Activated CD8-positive, alpha-beta T cell treated with anti-CD3 and anti-CD28 coated beads for 36 hours (primary cell): ENCODE measurements at regions of chr3 and their contacts with region 1.

Region 1: GRCh38 chr3:11060500-11061251 is 68.1 kb downstream of the SLC6A1 start:
- DNase-seq: peak; percentile 53
- ATAC-seq: peak; percentile 71
- H3K4me3 Mint-ChIP-seq: no peak overlapping the region
- H3K27ac Mint-ChIP-seq: no peak overlapping the region
- H3K4me1 Mint-ChIP-seq: no peaks in the 10 kb centered on the region
- H3K27me3 Mint-ChIP-seq: peaks cover 14% of the 10 kb centered on the region
- CTCF ChIP-seq: peak; percentile 73

Region 2: GRCh38 chr3:10758304-10759061 is 302.2 kb before region 1 on chr3:
- CTCF ChIA-PET with region 1: interaction called, 22 read pairs
- POLR2A ChIA-PET with region 1: interaction called, 3 read pairs
- intact Hi-C with region 1: loop called (anchors 5 kb)
- DNase-seq: peak; percentile 50
- ATAC-seq: peak; percentile 74
- H3K4me3 Mint-ChIP-seq: no peak overlapping the region
- H3K27ac Mint-ChIP-seq: no peak overlapping the region
- H3K4me1 Mint-ChIP-seq: peaks cover 3% of the 10 kb centered on the region
- H3K27me3 Mint-ChIP-seq: peaks cover 41% of the 10 kb centered on the region
- CTCF ChIP-seq: peak; percentile 81

Region 3: GRCh38 chr3:11037241-11037873 is 23.3 kb before region 1 on chr3:
- CTCF ChIA-PET with region 1: interaction called, 10 read pairs
- POLR2A ChIA-PET with region 1: no interaction called
- intact Hi-C with region 1: no loop called
- DNase-seq: no peak
- ATAC-seq: no peak
- H3K4me3 Mint-ChIP-seq: no peak overlapping the region
- H3K27ac Mint-ChIP-seq: no peak overlapping the region
- H3K4me1 Mint-ChIP-seq: no peaks in the 10 kb centered on the region
- H3K27me3 Mint-ChIP-seq: peaks cover 44% of the 10 kb centered on the region
- CTCF ChIP-seq: no peak

Region 4: GRCh38 chr3:11072631-11073030 is 12.0 kb after region 1 on chr3:
- CTCF ChIA-PET with region 1: interaction called, 21 read pairs
- POLR2A ChIA-PET with region 1: no interaction called
- intact Hi-C with region 1: no loop called
- DNase-seq: no peak
- ATAC-seq: no peak
- H3K4me3 Mint-ChIP-seq: no peak overlapping the region
- H3K27ac Mint-ChIP-seq: no peak overlapping the region
- H3K4me1 Mint-ChIP-seq: no peaks in the 10 kb centered on the region
- H3K27me3 Mint-ChIP-seq: peaks cover 30% of the 10 kb centered on the region
- CTCF ChIP-seq: no peak

Region 5: GRCh38 chr3:11206316-11206715 is 145.6 kb after region 1 on chr3:
- CTCF ChIA-PET with region 1: interaction called, 12 read pairs
- POLR2A ChIA-PET with region 1: no interaction called
- intact Hi-C with region 1: no loop called
- DNase-seq: no peak
- ATAC-seq: no peak
- H3K4me3 Mint-ChIP-seq: no peak overlapping the region
- H3K27ac Mint-ChIP-seq: no peak overlapping the region
- H3K4me1 Mint-ChIP-seq: no peaks in the 10 kb centered on the region
- H3K27me3 Mint-ChIP-seq: peaks cover 8% of the 10 kb centered on the region
- CTCF ChIP-seq: no peak